PC-3 (cell line): ENCODE measurements at regions of chr2 and their contacts with region 1.

Region 1: DNA sequence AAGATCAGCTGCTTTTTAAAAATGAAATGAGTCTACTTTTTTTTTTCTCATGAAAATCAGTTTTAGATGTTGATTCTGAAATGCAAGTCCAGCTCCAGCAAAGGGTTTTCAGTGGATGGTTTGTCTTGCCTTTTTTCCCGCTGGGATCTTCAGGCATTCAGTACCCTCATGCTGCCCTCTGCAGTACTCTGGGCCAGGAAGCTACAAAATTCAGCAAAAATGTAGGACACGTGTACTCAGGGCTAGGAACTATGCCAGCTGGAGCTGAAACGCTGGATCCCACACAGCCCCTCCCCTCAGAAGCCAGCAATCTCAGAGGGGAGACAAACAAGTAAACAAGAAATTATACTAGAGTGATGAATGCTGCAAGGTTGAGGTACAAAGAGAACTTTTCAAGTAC is 97.3 kb downstream of the MMADHC start:
- DNase-seq: peak; percentile 13
- ATAC-seq: peak; percentile 48; the same call in 1 of the 2 replicates
- H3K4me3 ChIP-seq: no peak overlapping the region
- H3K27ac ChIP-seq: no peak overlapping the region
- H3K4me1 ChIP-seq: no peaks in the 10 kb centered on the region
- H3K27me3 ChIP-seq: peaks cover 16% of the 10 kb centered on the region; the same call in 1 of the 2 replicates
- CTCF ChIP-seq: no peak

Region 2: GRCh38 chr2:149017116-149017985 is 472.9 kb before region 1 on chr2:
- CTCF ChIA-PET with region 1: no interaction called
- POLR2A ChIA-PET with region 1: no interaction called
- intact Hi-C with region 1: loop called (anchors 1 kb)
- DNase-seq: peak; percentile 86
- ATAC-seq: peak; percentile 78
- H3K4me3 ChIP-seq: no peak overlapping the region
- H3K27ac ChIP-seq: no peak overlapping the region
- H3K4me1 ChIP-seq: no peaks in the 10 kb centered on the region
- H3K27me3 ChIP-seq: no peaks in the 10 kb centered on the region
- CTCF ChIP-seq: peak; percentile 89

Region 3: DNA sequence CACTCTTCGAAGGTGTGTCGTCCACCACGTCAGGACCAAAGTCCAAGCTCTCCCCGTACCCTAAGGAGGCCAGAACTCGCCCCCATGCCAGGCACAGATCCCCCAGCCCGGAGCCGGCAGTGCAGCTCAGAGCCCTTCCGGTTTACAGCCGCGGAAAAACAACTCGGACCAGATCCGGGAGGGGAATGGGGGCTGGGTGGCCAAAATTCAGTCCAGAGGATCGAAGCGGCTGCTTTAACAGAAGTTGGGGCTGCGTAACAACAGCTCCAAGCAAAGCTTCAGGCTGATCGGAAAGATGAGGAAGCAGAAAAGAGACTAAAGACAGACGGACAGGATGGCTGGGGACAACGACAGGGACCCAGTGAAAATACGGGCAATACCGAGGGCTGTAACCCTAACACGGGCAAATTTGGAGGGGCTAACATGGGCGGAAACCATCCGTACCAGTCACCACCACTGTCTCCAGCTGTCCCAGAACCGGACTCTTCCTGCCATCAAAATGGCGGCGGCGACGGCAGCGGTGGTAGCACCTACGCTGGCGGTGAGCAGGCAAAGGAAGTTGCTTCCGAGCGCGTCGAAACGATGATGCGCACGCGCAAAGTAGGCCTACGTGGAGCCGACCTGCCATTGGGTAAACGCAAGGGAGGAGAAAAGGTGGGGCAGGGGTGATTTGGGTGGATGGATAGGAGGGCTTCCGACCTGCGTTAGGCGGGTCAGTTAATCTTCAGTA is 97.1 kb after region 1 on chr2 and contains the start of gene MMADHC:
- CTCF ChIA-PET with region 1: no interaction called
- POLR2A ChIA-PET with region 1: no interaction called
- intact Hi-C with region 1: no loop called
- DNase-seq: peak; percentile 97
- ATAC-seq: peak; percentile 97
- H3K4me3 ChIP-seq: peak within 1 kb of the TSS; percentile 88
- H3K27ac ChIP-seq: peak within 1 kb of the TSS; percentile 84
- H3K4me1 ChIP-seq: peaks cover 24% of the 10 kb centered on the region
- H3K27me3 ChIP-seq: no peaks in the 10 kb centered on the region
- CTCF ChIP-seq: no peak
- total RNA-seq, gene MMADHC: 99.1 and 130 TPM in 2 replicates

Region 4: DNA sequence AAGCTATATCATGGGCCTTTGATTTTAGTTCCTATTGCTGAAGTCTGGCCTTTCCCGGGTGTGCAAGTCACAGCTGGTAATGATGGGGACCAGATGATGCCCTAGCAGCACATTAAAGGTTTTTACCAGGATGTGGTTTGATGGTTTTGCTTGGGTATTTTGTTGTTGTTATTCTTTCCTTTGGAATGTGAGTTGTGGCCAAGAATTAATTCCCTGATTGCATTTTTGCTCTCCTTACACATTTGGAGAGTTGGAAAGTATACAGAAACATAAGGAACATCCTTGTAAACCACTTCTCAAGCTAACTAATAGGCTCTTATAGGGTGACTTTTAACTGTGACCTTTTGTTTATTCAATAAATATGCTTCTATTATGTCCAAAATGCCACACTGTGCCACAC is 251.3 kb after region 1 on chr2:
- CTCF ChIA-PET with region 1: interaction called, 13 read pairs
- POLR2A ChIA-PET with region 1: no interaction called
- intact Hi-C with region 1: no loop called
- DNase-seq: peak; percentile 60
- ATAC-seq: peak; percentile 17; the same call in 1 of the 2 replicates
- H3K4me3 ChIP-seq: no peak overlapping the region
- H3K27ac ChIP-seq: no peak overlapping the region
- H3K4me1 ChIP-seq: peaks cover 39% of the 10 kb centered on the region
- H3K27me3 ChIP-seq: no peaks in the 10 kb centered on the region
- CTCF ChIP-seq: no peak